ENCODE measurements at regions of chr3 and their contacts with region 1.

Region 1: DNA sequence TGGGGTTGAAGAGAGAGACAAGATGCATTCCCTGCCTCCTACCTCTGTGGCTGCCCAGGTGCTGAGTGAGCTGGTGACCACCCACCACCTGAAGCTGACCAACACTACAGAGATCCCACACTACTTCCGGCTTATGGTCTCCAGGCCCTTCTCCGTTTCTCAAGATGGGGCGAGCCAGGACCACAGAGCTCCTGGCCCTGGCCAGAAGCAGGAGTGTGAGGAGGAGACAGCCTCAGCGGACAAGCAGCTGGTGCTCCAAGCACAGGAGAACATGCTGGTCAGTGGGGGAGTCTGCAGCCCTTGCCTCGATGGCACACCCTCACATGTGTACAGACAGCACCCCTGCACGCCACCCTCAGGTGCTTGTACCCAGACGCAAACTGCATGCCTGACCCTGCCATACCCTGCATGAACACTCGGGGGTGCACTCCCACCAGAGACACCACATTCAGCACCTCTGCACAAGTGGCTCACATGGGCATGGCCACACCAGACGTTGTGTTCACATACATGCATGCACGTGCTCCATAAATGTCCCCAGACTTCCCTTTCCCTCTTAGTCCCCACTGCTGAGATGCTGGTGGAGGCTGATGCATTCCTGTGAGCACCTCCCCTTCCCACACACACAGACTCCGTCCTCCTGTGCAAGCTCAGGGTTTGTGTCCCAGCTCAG is 19.0 kb downstream of the ACAA1 start:
- DNase-seq: peak; percentile 80
- H3K4me3 ChIP-seq: no peak overlapping the region
- H3K27ac ChIP-seq: no peak overlapping the region
- H3K4me1 ChIP-seq: no peaks in the 10 kb centered on the region
- H3K27me3 ChIP-seq: no peaks in the 10 kb centered on the region
- CTCF ChIP-seq: peak; percentile 70
- EP300 ChIP-seq: no peak
- RAD21 ChIP-seq: peak; percentile 74

Region 2: DNA sequence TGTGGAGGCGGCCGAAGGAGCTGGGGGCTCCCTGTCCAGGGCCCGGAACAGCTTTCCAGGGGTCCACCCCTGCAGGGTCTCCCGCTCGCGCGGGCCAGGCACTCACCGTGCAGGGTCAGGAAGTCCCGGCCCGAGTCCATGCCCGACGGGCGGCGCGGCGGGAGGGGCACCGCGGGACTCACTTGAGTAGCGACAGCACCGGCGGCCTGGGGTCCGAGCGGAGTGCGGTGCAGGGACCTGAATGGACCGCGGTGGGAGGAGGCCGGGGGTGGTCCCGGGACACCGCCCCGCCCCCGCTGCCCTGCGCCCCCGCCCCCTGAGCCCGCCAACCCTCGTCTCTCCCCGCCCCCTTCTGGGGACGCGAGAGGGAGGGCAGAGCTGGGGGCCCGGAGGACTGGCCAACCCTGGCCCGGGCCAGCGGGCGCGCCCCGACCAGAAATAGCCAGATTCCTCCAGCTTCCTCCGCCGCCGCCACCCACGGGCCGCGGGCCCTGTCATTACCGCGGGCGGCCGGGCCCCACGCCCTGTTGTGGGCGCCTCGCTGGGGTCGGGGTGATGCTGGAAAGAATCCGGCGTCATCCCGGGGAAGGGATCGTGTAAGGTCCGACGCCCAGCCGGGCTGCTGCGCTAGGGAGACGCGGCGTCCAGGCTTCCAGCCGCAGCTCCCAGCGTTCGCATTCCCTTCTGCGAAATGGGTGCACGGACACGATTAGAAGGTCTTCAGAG is 88.3 kb before region 1 on chr3 and contains the start of gene PLCD1:
- CTCF ChIA-PET with region 1: no interaction called
- POLR2A ChIA-PET with region 1: no interaction called
- DNase-seq: peak; percentile 98
- H3K4me3 ChIP-seq: peak within 1 kb of the TSS; percentile 75 to 77
- H3K27ac ChIP-seq: peak within 1 kb of the TSS; percentile 55 to 58; a peak in 3 of 4 replicates
- H3K4me1 ChIP-seq: peaks cover 19 to 23% of the 10 kb centered on the region in 2 experiments; a peak in 3 of 4 replicates
- H3K27me3 ChIP-seq: no peaks in the 10 kb centered on the region
- CTCF ChIP-seq: no peak
- EP300 ChIP-seq: no peak
- RAD21 ChIP-seq: no peak
- polyA plus RNA-seq, gene PLCD1: 15.2 and 20.2 TPM in 2 replicates

Region 3: DNA sequence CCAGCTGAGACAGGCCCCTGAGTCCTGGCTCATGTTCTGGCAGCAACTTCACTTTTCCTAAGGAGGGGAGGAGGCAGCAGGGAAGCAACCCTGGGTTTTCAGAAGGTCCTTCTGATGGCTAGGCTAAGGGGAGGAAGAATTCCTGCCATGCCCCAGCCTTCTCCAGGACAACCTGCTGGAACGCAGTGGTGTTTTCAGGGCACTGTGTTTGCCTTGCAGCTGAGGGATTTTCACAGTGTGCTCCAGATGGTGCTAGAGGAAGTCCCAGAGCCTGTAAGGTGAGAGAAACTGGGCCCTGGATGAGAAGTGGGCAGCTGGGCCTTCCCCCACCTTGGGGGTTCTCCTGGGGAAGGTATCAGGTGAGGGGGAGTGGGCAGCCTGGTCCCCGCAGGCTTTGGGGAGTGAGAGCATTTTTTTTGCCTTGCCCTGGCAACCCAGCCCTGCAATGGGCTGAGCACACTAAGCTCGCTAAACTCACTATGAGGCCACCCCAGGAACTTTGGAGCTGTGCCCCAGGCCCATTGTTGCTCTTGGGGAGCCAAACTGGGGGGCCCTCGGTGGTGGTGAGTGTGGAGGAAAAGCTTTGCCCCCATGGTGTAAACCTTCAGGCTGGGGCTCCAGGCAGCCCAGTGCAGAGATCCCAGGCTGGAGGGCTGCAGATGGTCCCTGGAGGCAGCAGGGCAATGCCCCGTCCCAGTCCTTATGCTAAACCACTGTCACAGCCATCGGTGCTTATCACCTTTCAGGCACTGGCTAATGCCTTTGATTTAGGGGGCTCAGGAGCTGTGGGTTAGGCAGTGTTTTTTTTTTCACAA is 22.0 kb before region 1 on chr3:
- CTCF ChIA-PET with region 1: interaction called, 11 read pairs
- POLR2A ChIA-PET with region 1: no interaction called
- DNase-seq: no peak
- H3K4me3 ChIP-seq: no peak overlapping the region
- H3K27ac ChIP-seq: no peak overlapping the region
- H3K4me1 ChIP-seq: no peaks in the 10 kb centered on the region
- H3K27me3 ChIP-seq: peaks cover 13% of the 10 kb centered on the region; the same call in 1 of the 2 replicates
- CTCF ChIP-seq: no peak
- EP300 ChIP-seq: no peak
- RAD21 ChIP-seq: no peak

Region 4: DNA sequence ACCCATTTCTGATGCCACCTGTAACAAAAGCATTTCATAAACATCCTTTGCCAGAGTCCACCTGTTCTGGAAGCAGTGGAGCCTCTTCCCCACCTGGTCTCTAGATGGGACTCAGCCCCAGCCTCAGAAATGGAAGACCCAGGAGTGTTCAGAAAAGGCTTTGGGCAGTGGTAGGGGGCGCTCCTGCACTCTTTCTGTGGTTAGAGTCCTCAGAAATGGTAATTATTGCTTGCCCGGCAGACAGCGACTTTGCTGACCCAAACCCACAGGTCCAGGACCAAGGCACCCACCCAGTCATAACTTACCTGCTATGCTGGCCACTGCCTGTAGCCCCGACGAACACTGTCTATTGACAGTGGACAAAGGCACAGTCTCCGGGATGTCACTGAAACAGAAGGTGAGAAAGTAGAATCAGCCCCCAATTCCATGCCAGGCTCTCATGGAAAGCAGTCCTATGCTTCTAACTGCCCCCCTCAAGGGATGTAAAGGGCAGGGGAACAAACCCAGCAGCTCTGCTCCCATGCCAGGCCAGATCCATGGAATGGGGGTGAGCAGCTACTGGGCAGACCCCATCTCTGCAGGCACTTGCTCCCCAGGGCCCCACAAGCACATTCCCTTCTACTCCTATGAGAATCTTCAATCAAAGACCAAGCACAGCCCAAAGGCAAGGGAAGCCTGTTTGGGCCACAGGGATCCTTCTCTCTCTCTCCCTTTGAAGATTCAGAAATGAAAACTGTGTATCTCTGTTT is 13.9 kb after region 1 on chr3:
- CTCF ChIA-PET with region 1: interaction called, 12 read pairs
- POLR2A ChIA-PET with region 1: interaction called, 3 read pairs
- DNase-seq: peak; percentile 60
- H3K4me3 ChIP-seq: no peak overlapping the region
- H3K27ac ChIP-seq: no peak overlapping the region
- H3K4me1 ChIP-seq: peaks cover 4 to 9% of the 10 kb centered on the region in 2 experiments; a peak in 2 of 4 replicates
- H3K27me3 ChIP-seq: no peaks in the 10 kb centered on the region
- CTCF ChIP-seq: peak; percentile 64
- EP300 ChIP-seq: no peak
- RAD21 ChIP-seq: peak; percentile 64

Region 5: DNA sequence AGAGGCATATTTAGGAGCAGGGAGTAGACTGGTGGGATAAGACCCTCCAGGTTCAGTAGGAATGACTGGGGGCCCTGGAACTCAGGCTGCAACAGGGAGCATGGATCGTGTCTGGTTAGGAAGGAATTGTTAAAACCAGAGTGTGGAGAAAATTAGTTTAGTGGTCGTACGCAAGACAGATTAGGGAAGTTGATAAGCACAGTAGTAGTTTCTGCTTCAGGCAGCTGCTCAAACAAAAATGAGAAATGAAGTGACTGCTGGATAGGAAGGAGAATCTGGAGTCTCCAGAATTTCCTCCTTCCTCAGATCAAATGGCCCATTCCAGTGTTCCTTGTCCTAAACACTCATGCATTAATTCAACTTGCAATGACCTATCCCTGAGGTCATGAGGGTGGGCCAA is 31.8 kb after region 1 on chr3:
- CTCF ChIA-PET with region 1: no interaction called
- POLR2A ChIA-PET with region 1: no interaction called
- DNase-seq: no peak
- H3K4me3 ChIP-seq: no peak overlapping the region
- H3K27ac ChIP-seq: no peak overlapping the region; a peak in 1 of 4 replicates
- H3K4me1 ChIP-seq: peaks cover 0 to 5% of the 10 kb centered on the region in 2 experiments; a peak in 1 of 4 replicates
- H3K27me3 ChIP-seq: no peaks in the 10 kb centered on the region
- CTCF ChIP-seq: no peak
- EP300 ChIP-seq: no peak
- RAD21 ChIP-seq: no peak

Region 6: DNA sequence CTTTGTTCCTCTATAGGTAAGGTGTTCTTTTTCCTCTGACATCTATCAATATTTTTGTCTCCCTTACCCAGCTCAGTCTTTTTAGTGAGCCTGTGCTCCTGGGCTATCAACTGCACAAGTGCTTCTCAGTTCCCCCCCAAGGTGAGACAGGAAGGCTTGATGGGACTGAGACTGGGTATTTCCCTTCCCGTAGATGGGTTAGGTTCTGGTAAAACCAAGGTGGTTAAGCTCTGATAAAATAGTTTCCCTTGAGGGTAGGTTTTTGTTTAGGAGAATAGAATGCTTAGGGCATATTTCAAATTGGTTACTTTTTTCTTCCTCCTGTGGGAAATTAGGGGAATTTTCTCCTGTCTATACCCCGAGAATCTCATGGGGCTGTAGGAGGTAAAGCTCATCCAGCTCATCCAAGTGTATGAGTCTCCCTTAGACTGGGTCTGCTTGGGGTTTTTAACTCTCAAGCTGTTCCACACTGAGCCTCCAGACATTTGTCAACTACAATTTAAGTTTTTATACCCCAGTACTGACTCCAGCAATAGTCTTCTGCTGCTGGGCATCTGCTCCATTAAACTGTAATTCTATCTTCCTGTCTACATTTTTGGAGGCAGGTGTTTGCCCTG is 92.4 kb after region 1 on chr3:
- CTCF ChIA-PET with region 1: no interaction called
- POLR2A ChIA-PET with region 1: no interaction called
- DNase-seq: no peak
- H3K4me3 ChIP-seq: no peak overlapping the region
- H3K27ac ChIP-seq: no peak overlapping the region
- H3K4me1 ChIP-seq: peaks cover 0 to 3% of the 10 kb centered on the region in 2 experiments; a peak in 2 of 4 replicates
- H3K27me3 ChIP-seq: no peaks in the 10 kb centered on the region
- CTCF ChIP-seq: no peak
- EP300 ChIP-seq: no peak
- RAD21 ChIP-seq: no peak

Region 7: DNA sequence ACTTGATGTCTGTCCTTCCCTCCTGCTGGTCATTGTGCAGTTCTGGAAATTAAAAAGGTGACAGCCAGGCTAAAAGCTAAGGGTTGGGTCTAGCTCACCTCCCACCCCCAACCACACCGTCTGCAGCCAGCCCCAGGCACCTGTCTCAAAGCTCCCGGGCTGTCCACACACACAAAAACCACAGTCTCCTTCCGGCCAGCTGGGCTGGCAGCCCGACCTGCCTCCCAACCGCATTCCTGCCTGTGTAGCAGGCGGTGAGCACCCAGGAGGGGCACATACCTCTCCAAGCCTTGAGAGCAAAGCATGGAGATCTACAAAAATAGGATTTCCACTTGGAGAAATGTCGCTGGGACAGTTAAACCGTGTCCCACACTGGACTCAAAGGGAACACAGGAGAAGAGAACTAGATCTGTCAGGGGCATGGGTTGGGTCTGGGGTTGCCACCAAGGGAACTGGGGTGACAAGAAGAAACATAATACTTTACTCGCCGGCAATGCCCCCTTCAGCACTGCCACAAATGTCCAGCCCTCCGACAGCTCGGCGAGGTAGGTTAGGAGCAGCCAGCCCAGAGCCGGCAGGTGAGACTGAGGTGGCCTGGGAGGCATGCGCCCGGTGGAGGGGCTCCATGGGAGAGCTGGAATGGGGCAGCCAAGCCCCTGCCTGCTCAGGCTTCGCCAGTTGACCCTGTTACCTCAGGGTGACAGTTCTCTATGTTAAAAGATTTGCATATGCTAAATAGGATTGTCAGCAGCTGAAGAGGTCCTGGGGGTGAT is 430.5 kb after region 1 on chr3:
- CTCF ChIA-PET with region 1: no interaction called
- POLR2A ChIA-PET with region 1: no interaction called
- DNase-seq: no peak
- H3K4me3 ChIP-seq: no peak overlapping the region
- H3K27ac ChIP-seq: no peak overlapping the region
- H3K4me1 ChIP-seq: peaks cover 0 to 6% of the 10 kb centered on the region in 2 experiments; a peak in 1 of 4 replicates
- H3K27me3 ChIP-seq: no peaks in the 10 kb centered on the region
- CTCF ChIP-seq: no peak
- EP300 ChIP-seq: no peak
- RAD21 ChIP-seq: no peak

Measured in SK-N-SH (cell line).